CD4-positive, alpha-beta T cell (primary cell): ENCODE measurements at regions of chr10 and their contacts with region 1.

Region 1: GRCh38 chr10:101067356-101068083 is 5.7 kb downstream of the KAZALD1 start:
- DNase-seq: peak; percentile 61 to 88 (median 69)
- ATAC-seq: peak; percentile 83
- H3K4me3 ChIP-seq: peak overlapping the region; percentile 70
- H3K4me3 Mint-ChIP-seq: peak overlapping the region; percentile 93
- H3K27ac ChIP-seq: no peak overlapping the region
- H3K27ac Mint-ChIP-seq: no peak overlapping the region
- H3K4me1 ChIP-seq: peaks cover 34% of the 10 kb centered on the region
- H3K4me1 Mint-ChIP-seq: peaks cover 30% of the 10 kb centered on the region
- H3K27me3 ChIP-seq: peaks cover 52 to 59% of the 10 kb centered on the region in 2 experiments
- H3K27me3 Mint-ChIP-seq: peaks cover 63% of the 10 kb centered on the region
- CTCF ChIP-seq: peak; percentile 96

Region 2: GRCh38 chr10:101050208-101051069 is 17.1 kb before region 1 on chr10:
- CTCF ChIA-PET with region 1: interaction called, 45 read pairs
- POLR2A ChIA-PET with region 1: interaction called, 3 read pairs
- intact Hi-C with region 1: no loop called
- DNase-seq: peak; percentile 57 to 85 (median 76)
- ATAC-seq: peak; percentile 98
- H3K4me3 ChIP-seq: no peak overlapping the region
- H3K4me3 Mint-ChIP-seq: peak overlapping the region; percentile 39
- H3K27ac ChIP-seq: no peak overlapping the region
- H3K27ac Mint-ChIP-seq: no peak overlapping the region
- H3K4me1 ChIP-seq: peaks cover 20% of the 10 kb centered on the region
- H3K4me1 Mint-ChIP-seq: peaks cover 14% of the 10 kb centered on the region
- H3K27me3 ChIP-seq: peaks cover 44 to 46% of the 10 kb centered on the region in 2 experiments
- H3K27me3 Mint-ChIP-seq: peaks cover 52% of the 10 kb centered on the region
- CTCF ChIP-seq: peak; percentile 76

Region 3: GRCh38 chr10:101103430-101103829 is 35.9 kb after region 1 on chr10:
- CTCF ChIA-PET with region 1: no interaction called
- POLR2A ChIA-PET with region 1: no interaction called
- intact Hi-C with region 1: no loop called
- DNase-seq: no peak
- ATAC-seq: no peak
- H3K4me3 ChIP-seq: no peak overlapping the region
- H3K4me3 Mint-ChIP-seq: no peak overlapping the region
- H3K27ac ChIP-seq: no peak overlapping the region
- H3K27ac Mint-ChIP-seq: no peak overlapping the region
- H3K4me1 ChIP-seq: no peaks in the 10 kb centered on the region
- H3K4me1 Mint-ChIP-seq: no peaks in the 10 kb centered on the region
- H3K27me3 ChIP-seq: peaks cover 23 to 26% of the 10 kb centered on the region in 2 experiments
- H3K27me3 Mint-ChIP-seq: peaks cover 59% of the 10 kb centered on the region
- CTCF ChIP-seq: no peak